ENCODE measurements at regions of chr6 and their contacts with region 1.

Region 1: DNA sequence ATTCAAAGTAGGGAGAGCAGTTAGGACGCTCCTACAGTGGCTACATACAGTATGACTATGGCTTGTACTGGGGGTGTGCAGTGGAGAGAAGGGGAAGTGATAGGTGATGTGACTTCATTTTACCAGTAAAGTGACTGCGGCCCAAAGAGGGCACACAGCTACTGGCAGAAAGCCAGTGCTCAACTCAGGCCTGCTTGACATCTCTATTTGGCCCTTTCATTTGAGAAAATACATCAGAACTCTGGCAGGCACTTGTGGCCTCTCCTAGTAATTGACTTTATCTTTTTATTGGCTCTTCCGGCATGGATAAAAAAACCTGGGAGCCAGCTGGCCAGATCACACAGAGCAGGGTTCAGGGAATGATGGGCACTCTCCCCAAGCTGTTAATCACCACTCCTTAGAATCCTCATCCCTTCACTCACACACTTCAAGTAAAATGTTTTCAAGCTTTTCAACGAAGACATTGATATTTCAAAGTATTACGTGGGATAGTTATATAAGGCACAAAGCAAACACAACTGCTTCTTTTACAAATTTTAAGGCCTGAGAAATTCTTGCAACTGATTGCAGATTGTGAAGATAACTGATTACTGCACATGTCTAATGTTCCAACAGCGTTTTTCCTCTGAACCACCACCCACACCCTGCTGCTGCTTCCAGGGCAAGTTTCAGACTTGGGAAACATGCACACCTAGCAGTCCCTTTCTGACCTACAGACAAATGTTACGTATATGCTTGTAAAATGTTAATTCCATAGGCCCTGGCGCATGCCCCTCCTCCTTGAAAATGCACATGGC is 73.5 kb downstream of the TNFRSF21 start:
- H3K4me3 Mint-ChIP-seq: no peak overlapping the region
- H3K27ac Mint-ChIP-seq: peak overlapping the region; percentile 80
- H3K4me1 Mint-ChIP-seq: peaks cover 60% of the 10 kb centered on the region
- H3K27me3 Mint-ChIP-seq: peaks cover 11% of the 10 kb centered on the region

Region 2: GRCh38 chr6:47134476-47135189 is 101.5 kb before region 1 on chr6:
- intact Hi-C with region 1: loop called (anchors 10 kb)
- H3K4me3 Mint-ChIP-seq: peak overlapping the region; percentile 35
- H3K27ac Mint-ChIP-seq: peak overlapping the region; percentile 77
- H3K4me1 Mint-ChIP-seq: peaks cover 66% of the 10 kb centered on the region
- H3K27me3 Mint-ChIP-seq: peaks cover 31% of the 10 kb centered on the region

Region 3: GRCh38 chr6:47440719-47441118 is 204.6 kb after region 1 on chr6:
- intact Hi-C with region 1: no loop called
- H3K4me3 Mint-ChIP-seq: no peak overlapping the region
- H3K27ac Mint-ChIP-seq: no peak overlapping the region
- H3K4me1 Mint-ChIP-seq: peaks cover 34% of the 10 kb centered on the region
- H3K27me3 Mint-ChIP-seq: peaks cover 67% of the 10 kb centered on the region